ENCODE measurements at regions of chr7 and their contacts with region 1.

Region 1: DNA sequence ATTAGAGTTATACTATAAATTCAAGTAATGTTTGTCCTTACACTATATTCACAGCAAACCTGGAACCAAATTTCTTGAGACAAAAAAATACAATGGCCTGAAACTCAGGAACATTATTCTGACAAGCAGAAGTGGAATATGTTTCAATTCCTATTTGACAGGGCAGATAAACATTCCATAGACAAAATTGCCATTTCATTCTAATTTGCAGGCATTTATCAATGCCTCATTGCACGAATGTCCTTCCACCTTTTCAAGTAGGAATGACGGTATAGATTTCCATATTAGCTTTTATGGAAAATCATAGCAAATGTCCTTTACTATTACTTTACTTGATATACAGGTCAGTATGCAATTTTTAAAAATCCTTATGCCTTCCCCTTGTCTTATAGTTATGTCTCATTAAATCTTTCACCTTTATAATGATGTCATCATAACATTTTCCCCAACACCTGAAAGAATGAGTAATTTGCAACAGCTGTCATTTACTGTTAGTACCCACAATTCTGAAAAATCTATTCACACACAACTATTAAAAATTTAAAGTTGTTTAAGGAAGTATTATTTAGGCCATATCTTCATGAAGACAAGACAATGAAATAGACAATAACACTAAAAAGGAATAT is 299.7 kb upstream of the SEMA3C start:
- DNase-seq: no peak
- H3K4me3 ChIP-seq: no peak overlapping the region
- H3K27ac ChIP-seq: no peak overlapping the region
- H3K4me1 ChIP-seq: no peaks in the 10 kb centered on the region
- H3K27me3 ChIP-seq: no peaks in the 10 kb centered on the region
- CTCF ChIP-seq: no peak
- EP300 ChIP-seq: no peak
- POLR2A ChIP-seq: no peak

Region 2: DNA sequence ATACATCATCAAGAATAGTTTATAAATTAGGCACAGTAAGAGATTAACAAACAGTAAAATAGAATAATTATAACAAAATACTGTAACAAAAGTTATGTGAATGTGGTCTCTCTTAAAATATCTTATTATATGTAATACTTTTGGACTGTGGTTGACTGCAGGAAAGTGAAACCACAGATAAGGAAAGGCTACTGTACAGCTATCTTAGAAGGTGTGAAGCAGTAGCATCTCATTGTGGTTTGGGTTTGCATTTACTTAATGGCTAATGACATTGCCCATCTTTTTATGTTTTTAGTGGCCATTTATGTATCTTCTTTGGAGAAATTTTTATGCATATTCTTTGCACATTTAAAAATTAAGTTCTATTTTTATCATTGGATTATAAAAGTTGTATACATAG is 1468.7 kb before region 1 on chr7:
- in situ Hi-C with region 1: no loop called
- intact Hi-C with region 1: loop called (anchors 5 kb)
- DNase-seq: no peak
- H3K4me3 ChIP-seq: no peak overlapping the region
- H3K27ac ChIP-seq: no peak overlapping the region
- H3K4me1 ChIP-seq: no peaks in the 10 kb centered on the region
- H3K27me3 ChIP-seq: no peaks in the 10 kb centered on the region
- CTCF ChIP-seq: no peak
- EP300 ChIP-seq: no peak
- POLR2A ChIP-seq: no peak

Region 3: GRCh38 chr7:80941208-80941758 is 277.3 kb before region 1 on chr7:
- in situ Hi-C with region 1: no loop called
- intact Hi-C with region 1: no loop called
- DNase-seq: no peak
- H3K4me3 ChIP-seq: no peak overlapping the region
- H3K27ac ChIP-seq: peak overlapping the region; percentile 52 to 77 (median 64)
- H3K4me1 ChIP-seq: peaks cover 0 to 27% (median 17%) of the 10 kb centered on the region in 4 donors
- H3K27me3 ChIP-seq: no peaks in the 10 kb centered on the region
- CTCF ChIP-seq: no peak
- EP300 ChIP-seq: no peak
- POLR2A ChIP-seq: no peak

Region 4: GRCh38 chr7:81857385-81857784 is 638.8 kb after region 1 on chr7:
- in situ Hi-C with region 1: no loop called
- intact Hi-C with region 1: no loop called
- DNase-seq: no peak
- H3K4me3 ChIP-seq: no peak overlapping the region
- H3K27ac ChIP-seq: no peak overlapping the region
- H3K4me1 ChIP-seq: no peaks in the 10 kb centered on the region
- H3K27me3 ChIP-seq: no peaks in the 10 kb centered on the region
- CTCF ChIP-seq: no peak
- EP300 ChIP-seq: no peak
- POLR2A ChIP-seq: no peak

Measured in transverse colon (tissue), 4 donors.